B cell (primary cell): ENCODE measurements at regions of chr17 and their contacts with region 1.

Region 1: GRCh38 chr17:40191237-40192208 is 14.3 kb downstream of the RAPGEFL1 start:
- DNase-seq: peak; percentile 87
- ATAC-seq: peak; percentile 89
- H3K4me3 ChIP-seq: peak overlapping the region; percentile 17 to 76 (median 60)
- H3K4me3 Mint-ChIP-seq: peak overlapping the region; percentile 99
- H3K27ac ChIP-seq: no peak overlapping the region
- H3K27ac Mint-ChIP-seq: peak overlapping the region; percentile 89
- H3K4me1 ChIP-seq: peaks cover 11 to 17% of the 10 kb centered on the region in 2 donors
- H3K4me1 Mint-ChIP-seq: peaks cover 23% of the 10 kb centered on the region
- H3K27me3 ChIP-seq: no peaks in the 10 kb centered on the region
- H3K27me3 Mint-ChIP-seq: no peaks in the 10 kb centered on the region
- CTCF ChIP-seq: peak; percentile 79

Region 2: GRCh38 chr17:40018211-40019121 is 173.1 kb before region 1 on chr17:
- CTCF ChIA-PET with region 1: interaction called, 20 read pairs
- POLR2A ChIA-PET with region 1: no interaction called
- intact Hi-C with region 1: no loop called
- DNase-seq: no peak
- ATAC-seq: no peak
- H3K4me3 ChIP-seq: no peak overlapping the region
- H3K4me3 Mint-ChIP-seq: no peak overlapping the region
- H3K27ac ChIP-seq: no peak overlapping the region
- H3K27ac Mint-ChIP-seq: no peak overlapping the region
- H3K4me1 ChIP-seq: peaks cover 0 to 3% of the 10 kb centered on the region in 2 donors
- H3K4me1 Mint-ChIP-seq: no peaks in the 10 kb centered on the region
- H3K27me3 ChIP-seq: no peaks in the 10 kb centered on the region
- H3K27me3 Mint-ChIP-seq: no peaks in the 10 kb centered on the region
- CTCF ChIP-seq: no peak

Region 3: GRCh38 chr17:40177275-40177874 is 14.1 kb before region 1 on chr17 and contains the start of gene RAPGEFL1:
- CTCF ChIA-PET with region 1: interaction called, 17 read pairs
- POLR2A ChIA-PET with region 1: interaction called, 3 read pairs
- intact Hi-C with region 1: loop called (anchors 1 kb)
- DNase-seq: peak; percentile 88
- ATAC-seq: peak; percentile 99
- H3K4me3 ChIP-seq: peak within 1 kb of the TSS in 4 of 5 experiments; percentile 42 to 66 (median 59)
- H3K4me3 Mint-ChIP-seq: peak within 1 kb of the TSS; percentile 77
- H3K27ac ChIP-seq: no peak within 1 kb of the TSS
- H3K27ac Mint-ChIP-seq: no peak within 1 kb of the TSS
- H3K4me1 ChIP-seq: peaks cover 17% of the 10 kb centered on the region in 2 donors
- H3K4me1 Mint-ChIP-seq: peaks cover 11% of the 10 kb centered on the region
- H3K27me3 ChIP-seq: peaks cover 0 to 7% (median 2%) of the 10 kb centered on the region in 4 experiments
- H3K27me3 Mint-ChIP-seq: no peaks in the 10 kb centered on the region
- CTCF ChIP-seq: no peak
- total RNA-seq, gene RAPGEFL1: 5.4 and 5.6 TPM in 2 replicates

Region 4: DNA sequence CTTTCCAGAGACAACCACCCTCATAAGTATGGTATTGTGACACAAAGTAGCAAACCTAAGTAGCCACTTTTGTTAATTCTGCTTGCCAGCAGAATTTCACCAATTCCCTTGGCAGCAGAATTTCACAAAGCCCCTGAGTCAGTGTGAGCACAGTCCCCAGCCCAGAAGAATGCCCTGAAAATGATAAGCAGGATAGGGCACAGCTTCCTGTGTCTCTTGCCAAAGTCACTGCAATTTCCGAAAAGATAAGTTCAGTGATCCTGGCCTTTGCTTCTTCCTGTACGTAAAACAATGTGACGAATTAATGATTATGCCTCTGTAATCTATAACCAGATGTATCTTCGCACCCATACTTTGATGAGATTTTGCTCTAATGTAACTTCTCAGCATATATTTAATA is 11.6 kb after region 1 on chr17:
- CTCF ChIA-PET with region 1: interaction called, 11 read pairs
- POLR2A ChIA-PET with region 1: no interaction called
- intact Hi-C with region 1: no loop called
- DNase-seq: no peak
- ATAC-seq: no peak
- H3K4me3 ChIP-seq: no peak overlapping the region
- H3K4me3 Mint-ChIP-seq: no peak overlapping the region
- H3K27ac ChIP-seq: no peak overlapping the region
- H3K27ac Mint-ChIP-seq: no peak overlapping the region
- H3K4me1 ChIP-seq: no peaks in the 10 kb centered on the region
- H3K4me1 Mint-ChIP-seq: no peaks in the 10 kb centered on the region
- H3K27me3 ChIP-seq: peaks cover 0 to 4% (median 0%) of the 10 kb centered on the region in 4 experiments
- H3K27me3 Mint-ChIP-seq: peaks cover 9% of the 10 kb centered on the region
- CTCF ChIP-seq: no peak